GM10248 (cell line): ENCODE measurements at regions of chr1 and their contacts with region 1.

Region 1: DNA sequence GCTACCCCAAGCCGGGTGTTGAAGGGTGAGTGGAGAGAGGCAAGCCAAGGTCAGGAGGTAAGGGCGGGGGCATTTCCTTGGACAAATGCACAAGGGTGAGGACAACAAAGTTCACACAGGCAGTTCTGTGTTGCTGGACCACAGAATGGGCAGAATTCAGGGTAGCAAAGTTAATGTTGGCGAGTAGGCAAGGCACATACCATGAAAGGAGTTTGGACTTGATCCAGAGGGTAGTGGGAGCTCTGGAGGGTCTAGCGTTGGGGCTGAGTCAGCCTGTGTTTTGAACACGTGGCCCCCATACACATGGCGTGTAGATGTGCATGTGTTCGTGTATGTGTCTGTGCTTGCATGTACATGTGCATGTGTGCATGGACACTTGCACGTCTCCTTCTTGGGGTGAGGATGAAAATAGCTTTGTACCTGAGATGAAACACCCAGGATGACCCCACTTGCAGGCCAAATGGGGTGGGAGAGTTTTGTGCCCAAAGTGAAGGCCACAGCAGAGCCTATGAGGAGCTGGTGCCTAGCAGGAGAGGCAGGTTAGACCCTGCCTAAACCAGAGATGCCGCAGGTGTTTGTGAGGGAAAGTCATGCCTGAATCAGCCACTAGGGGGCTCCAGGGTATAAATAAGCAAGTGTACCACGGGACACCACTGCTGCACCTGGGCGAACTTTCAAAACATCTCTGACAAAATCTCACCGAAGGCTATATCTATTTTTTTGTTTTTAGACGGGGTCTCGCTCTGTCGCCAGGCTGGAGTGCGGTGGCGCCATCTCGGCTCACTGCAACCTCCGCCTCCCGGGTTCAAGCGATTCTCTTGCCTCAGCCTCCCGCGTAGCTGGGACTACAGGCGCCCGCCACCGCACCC is 21.8 kb downstream of the SLC27A3 start:
- DNase-seq: peak; percentile 86
- CTCF ChIP-seq: peak; percentile 78

Region 2: GRCh38 chr1:153816283-153816889 is 19.4 kb after region 1 on chr1:
- CTCF ChIA-PET with region 1: interaction called, 11 read pairs
- POLR2A ChIA-PET with region 1: no interaction called
- DNase-seq: no peak
- CTCF ChIP-seq: no peak

Region 3: DNA sequence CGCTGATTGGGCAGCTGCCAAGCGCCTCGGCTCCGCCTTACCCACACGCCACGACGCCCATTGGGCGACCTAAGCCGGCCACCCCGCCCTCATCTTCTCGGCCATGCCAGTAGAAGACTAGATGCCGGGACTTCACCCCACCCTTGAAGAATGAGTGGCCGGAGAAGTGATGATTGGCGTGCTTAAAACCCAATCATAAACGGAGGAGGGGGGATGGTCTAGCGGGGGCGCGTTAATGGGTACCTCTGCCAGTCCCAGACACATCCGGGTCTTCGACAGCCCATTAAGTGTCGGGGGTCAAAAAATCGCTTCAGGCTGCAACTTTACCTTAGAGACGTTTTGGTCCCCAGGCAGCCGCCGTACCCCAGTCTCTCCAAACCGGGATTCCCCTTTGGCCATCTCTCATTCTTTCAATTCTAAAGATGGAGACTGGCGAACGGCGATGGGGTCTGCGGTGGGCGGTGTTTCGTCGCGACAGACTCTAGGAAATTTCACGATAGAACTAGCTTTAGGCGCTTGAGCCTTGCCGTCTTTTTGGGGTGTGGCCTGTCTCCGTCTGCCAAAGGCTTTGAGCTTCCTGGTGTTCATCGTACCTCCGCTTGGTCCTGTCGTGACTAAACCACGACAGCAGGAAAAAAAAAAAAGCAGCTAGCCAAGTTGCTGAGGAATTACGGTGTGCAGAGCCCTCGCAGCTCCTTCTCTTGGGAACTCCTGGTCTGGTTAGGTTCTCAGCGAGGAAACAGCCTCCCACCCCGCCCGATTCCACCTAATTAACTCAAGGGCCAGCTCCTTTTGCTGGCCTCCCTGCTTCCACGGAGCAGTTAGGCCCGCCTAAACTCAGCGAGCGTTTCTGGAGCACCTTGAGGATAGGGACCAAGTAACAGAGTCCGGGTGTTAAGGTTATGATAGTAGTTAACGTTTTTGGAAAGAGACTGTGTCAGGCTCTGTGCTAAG is 126.2 kb after region 1 on chr1 and contains the start of gene GATAD2B:
- CTCF ChIA-PET with region 1: interaction called, 20 read pairs
- POLR2A ChIA-PET with region 1: no interaction called
- DNase-seq: peak; percentile 98
- CTCF ChIP-seq: no peak

Region 4: GRCh38 chr1:153977250-153978240 is 180.5 kb after region 1 on chr1 and contains the start of gene JTB:
- CTCF ChIA-PET with region 1: interaction called, 14 read pairs
- POLR2A ChIA-PET with region 1: no interaction called
- DNase-seq: peak; percentile 91
- CTCF ChIP-seq: no peak